Right ventricle myocardium inferior (tissue), 1 donor: ENCODE measurements at regions of chr6 and their contacts with region 1.

Region 1: DNA sequence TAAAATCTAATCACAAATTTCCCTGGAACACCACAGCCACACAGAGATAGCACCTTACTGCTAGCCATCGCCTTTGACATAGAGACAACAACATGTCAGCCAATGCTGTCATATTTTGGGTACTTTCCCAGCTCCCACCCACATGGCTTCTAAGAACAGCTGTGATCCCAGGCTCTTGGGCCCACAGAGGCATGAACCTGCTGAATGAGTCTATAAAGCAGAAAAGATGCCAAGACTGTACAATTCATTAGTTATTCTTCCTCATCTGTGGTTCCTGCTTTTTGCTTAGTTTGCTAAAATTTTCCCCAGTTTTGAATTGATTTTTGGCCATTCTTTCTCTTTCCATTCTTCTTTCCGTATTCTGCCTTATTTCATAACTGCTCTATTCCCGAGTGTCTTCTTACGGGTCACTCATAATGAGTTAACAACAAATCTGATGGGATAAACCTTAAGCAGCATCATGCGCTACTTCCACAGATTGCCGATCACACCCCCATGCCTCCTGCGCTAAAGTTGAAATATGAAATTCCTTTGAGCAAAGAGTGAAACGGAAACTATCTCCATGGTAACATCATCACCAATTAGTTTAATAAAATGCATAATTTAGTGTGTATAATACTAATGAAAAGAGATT is 327.3 kb upstream of the HSF2 start:
- DNase-seq: no peak
- ATAC-seq: peak; percentile 39

Region 2: GRCh38 chr6:121800047-121800446 is 272.1 kb before region 1 on chr6:
- intact Hi-C with region 1: no loop called
- DNase-seq: no peak
- ATAC-seq: no peak

Region 3: DNA sequence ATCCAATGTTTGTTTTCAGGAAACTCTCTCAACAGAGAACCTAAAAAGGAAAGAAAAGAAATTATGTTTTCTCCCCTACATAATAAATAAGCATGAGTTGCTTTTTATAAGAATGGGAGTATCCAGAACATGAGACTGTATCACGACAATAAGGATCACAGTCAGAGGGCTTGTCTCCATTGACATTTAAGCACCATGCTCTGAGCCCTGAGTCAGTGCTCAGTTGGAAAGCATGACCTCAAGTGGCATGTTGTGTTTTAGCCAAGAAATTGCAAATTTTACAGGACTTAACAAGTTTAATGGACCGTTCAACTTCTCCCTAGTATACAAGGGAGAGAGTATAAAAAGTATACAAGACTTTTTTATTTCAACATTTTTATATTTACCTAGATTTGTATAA is 205.0 kb before region 1 on chr6:
- intact Hi-C with region 1: no loop called
- DNase-seq: no peak
- ATAC-seq: no peak

Region 4: DNA sequence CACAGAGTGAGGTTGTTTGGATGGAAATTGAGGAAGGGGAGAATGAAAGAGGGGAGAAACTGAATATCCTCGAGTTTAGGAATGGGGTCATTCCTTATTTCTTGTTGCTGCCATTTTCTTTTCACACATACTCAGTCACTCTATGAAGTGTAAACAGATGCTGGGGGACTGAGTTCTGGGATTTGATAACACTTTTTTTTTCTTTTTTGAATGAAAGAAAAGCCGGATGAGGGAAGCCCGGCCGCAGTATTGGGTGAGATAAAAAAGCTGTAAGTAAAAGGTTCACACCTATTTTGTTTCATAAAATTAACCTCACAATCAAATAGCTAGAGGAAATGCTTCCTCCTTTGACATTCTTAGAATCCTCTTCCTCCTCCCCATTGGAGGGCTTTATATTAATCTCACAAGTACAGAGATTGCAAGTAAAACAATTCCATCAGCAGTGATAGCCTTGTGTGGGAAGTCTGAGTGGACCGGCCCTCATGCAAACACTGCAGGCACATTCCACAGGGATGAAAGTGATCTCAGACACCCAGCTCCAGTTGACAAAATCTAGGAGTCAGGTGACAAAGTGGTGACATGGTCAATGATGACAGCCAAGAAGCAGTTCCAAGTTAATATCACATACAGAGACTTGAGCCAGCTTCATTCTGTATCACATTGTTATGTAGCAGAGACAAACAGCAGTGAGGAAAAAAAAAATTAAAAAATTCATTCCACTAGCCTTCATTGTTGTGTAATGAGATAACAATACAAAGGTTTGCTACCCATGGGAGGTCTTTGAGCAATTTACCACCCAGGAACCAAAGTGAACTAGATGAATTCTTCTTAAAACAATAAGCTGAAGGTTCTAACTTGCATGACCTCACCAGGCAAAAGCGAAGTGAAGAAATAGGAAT is 63.8 kb before region 1 on chr6:
- intact Hi-C with region 1: no loop called
- DNase-seq: no peak
- ATAC-seq: peak; percentile 97

Region 5: GRCh38 chr6:122114717-122115116 is 42.6 kb after region 1 on chr6:
- intact Hi-C with region 1: loop called (anchors 5 kb)
- DNase-seq: no peak
- ATAC-seq: no peak